ENCODE measurements at regions of chr5 and their contacts with region 1.

Region 1: GRCh38 chr5:128083033-128083810 is at the start of gene SLC12A2:
- DNase-seq: peak; percentile 97
- H3K4me3 ChIP-seq: peak within 1 kb of the TSS; percentile 79 to 92 (median 80)
- H3K27ac ChIP-seq: peak within 1 kb of the TSS; percentile 95 to 98 (median 97)
- H3K4me1 ChIP-seq: peaks cover 0 to 62% (median 44%) of the 10 kb centered on the region in 4 donors
- H3K27me3 ChIP-seq: no peaks in the 10 kb centered on the region
- CTCF ChIP-seq: no peak
- EP300 ChIP-seq: peak in 1 of 4 donors; percentile 50
- POLR2A ChIP-seq: peak; percentile 22 to 52
- total RNA-seq, gene SLC12A2: 49.6 to 55.9 (median 53.1) TPM

Region 2: GRCh38 chr5:127564002-127564769 is 519.0 kb before region 1 on chr5:
- intact Hi-C with region 1: loop called (anchors 5 kb)
- DNase-seq: no peak
- H3K4me3 ChIP-seq: no peak overlapping the region
- H3K27ac ChIP-seq: peak overlapping the region in 2 of 4 donors; percentile 9 to 56
- H3K4me1 ChIP-seq: peaks cover 0 to 32% (median 22%) of the 10 kb centered on the region in 4 donors
- H3K27me3 ChIP-seq: no peaks in the 10 kb centered on the region
- CTCF ChIP-seq: peak; percentile 26 to 66 (median 51)
- EP300 ChIP-seq: no peak
- POLR2A ChIP-seq: no peak

Region 3: GRCh38 chr5:127757576-127757975 is 325.6 kb before region 1 on chr5:
- intact Hi-C with region 1: loop called (anchors 2 kb)
- DNase-seq: no peak
- H3K4me3 ChIP-seq: no peak overlapping the region
- H3K27ac ChIP-seq: peak overlapping the region in 1 of 4 donors; percentile 28
- H3K4me1 ChIP-seq: peaks cover 0 to 32% (median 18%) of the 10 kb centered on the region in 4 donors
- H3K27me3 ChIP-seq: no peaks in the 10 kb centered on the region
- CTCF ChIP-seq: peak in 3 of 4 experiments; percentile 28 to 38 (median 37)
- EP300 ChIP-seq: no peak
- POLR2A ChIP-seq: no peak

Region 4: GRCh38 chr5:127813633-127814587 is 269.3 kb before region 1 on chr5:
- intact Hi-C with region 1: loop called (anchors 2 kb)
- DNase-seq: no peak
- H3K4me3 ChIP-seq: no peak overlapping the region
- H3K27ac ChIP-seq: peak overlapping the region; percentile 59 to 78 (median 76)
- H3K4me1 ChIP-seq: peaks cover 0 to 45% (median 33%) of the 10 kb centered on the region in 4 donors
- H3K27me3 ChIP-seq: no peaks in the 10 kb centered on the region
- CTCF ChIP-seq: no peak
- EP300 ChIP-seq: no peak
- POLR2A ChIP-seq: no peak

Region 5: DNA sequence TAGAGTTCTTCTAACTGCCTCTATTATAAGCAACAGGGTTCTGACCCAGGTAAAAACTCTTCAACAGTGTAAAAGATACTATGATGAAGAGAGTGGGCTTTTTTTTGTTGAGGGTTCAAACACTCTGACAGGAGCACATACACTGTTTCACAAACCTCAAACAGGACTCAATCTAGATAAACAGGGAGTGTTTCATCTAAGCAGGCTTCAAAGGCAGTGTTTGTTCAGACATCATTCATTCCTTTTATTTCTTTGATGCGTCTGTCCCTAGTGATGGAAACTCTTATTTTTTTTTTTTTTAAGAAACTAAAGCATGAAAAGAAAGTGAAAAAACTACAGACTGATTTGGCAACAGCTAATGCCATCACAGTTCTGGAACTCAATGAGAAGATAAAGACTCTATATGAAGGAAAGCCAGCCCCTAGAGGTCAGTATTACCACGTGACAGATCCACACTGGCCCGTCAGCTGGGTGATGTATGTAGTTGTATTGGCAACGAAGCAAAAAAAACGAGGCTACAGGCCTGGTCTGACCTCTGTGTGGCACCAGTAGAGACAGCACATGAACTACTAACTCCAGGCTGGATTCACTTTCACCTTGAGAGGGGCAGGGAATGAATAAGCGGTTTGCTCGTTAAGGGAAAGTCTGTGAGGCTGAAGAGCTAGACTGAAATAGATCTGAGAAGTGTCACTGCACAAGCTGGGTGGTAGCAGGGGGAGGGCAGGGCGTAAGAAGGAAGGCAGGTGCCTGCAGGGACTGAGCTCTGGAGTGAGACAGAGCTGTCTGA is 207.8 kb before region 1 on chr5:
- intact Hi-C with region 1: loop called (anchors 10 kb)
- DNase-seq: no peak
- H3K4me3 ChIP-seq: no peak overlapping the region
- H3K27ac ChIP-seq: peak overlapping the region; percentile 34 to 59 (median 48)
- H3K4me1 ChIP-seq: peaks cover 0 to 31% (median 26%) of the 10 kb centered on the region in 4 donors
- H3K27me3 ChIP-seq: no peaks in the 10 kb centered on the region
- CTCF ChIP-seq: peak in 1 of 4 experiments; percentile 6
- EP300 ChIP-seq: no peak
- POLR2A ChIP-seq: no peak

Region 6: GRCh38 chr5:127950720-127951391 is 132.4 kb before region 1 on chr5:
- intact Hi-C with region 1: loop called (anchors 1 kb)
- DNase-seq: no peak
- H3K4me3 ChIP-seq: peak overlapping the region in 1 of 4 donors; percentile 5
- H3K27ac ChIP-seq: peak overlapping the region in 3 of 4 donors; percentile 64 to 71 (median 65)
- H3K4me1 ChIP-seq: peaks cover 0 to 24% (median 10%) of the 10 kb centered on the region in 4 donors
- H3K27me3 ChIP-seq: no peaks in the 10 kb centered on the region
- CTCF ChIP-seq: no peak
- EP300 ChIP-seq: no peak
- POLR2A ChIP-seq: no peak